Mammary epithelial cell (primary cell): ENCODE measurements at regions of chr6 and their contacts with region 1.

Region 1: DNA sequence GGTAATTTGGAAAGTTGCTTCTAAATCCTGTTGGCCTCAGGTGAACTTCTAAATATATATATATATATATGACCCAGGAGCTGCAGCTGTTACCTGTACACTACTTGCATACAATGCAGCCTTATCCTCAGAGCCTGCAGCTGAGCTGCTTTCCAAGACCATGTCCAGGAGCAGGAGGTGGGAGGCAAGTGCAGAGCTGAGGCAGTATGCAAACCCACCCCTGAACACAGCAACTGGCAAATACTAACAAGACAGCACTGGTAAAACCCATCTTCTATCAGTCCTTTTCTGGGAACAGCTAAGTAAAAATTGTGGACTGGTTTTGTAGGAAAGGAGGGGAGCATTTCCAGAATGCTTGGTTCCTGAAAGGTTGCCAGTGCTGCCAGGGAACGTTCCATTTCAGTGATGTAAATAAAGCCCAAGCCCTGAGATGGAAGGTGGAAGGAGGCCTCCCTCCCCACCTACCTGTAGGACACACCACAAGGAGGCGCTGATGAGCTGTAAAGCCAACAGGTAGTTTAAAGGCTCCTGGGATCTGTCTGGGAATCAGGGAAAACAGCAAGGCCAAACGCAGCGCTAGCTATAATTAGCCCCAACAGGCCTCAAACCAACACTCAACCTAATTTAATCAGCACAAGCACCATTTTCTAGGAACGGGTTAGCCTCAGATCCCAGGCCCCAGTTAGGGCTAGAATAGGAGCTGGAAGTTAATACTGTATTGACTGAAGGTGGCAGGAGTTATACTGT is 93.8 kb upstream of the MAP7 start:
- DNase-seq: peak; percentile 80
- H3K4me3 ChIP-seq: no peak overlapping the region
- H3K27ac ChIP-seq: no peak overlapping the region
- H3K4me1 ChIP-seq: peaks cover 7% of the 10 kb centered on the region
- H3K27me3 ChIP-seq: no peaks in the 10 kb centered on the region
- CTCF ChIP-seq: peak; percentile 96 to 97

Region 2: DNA sequence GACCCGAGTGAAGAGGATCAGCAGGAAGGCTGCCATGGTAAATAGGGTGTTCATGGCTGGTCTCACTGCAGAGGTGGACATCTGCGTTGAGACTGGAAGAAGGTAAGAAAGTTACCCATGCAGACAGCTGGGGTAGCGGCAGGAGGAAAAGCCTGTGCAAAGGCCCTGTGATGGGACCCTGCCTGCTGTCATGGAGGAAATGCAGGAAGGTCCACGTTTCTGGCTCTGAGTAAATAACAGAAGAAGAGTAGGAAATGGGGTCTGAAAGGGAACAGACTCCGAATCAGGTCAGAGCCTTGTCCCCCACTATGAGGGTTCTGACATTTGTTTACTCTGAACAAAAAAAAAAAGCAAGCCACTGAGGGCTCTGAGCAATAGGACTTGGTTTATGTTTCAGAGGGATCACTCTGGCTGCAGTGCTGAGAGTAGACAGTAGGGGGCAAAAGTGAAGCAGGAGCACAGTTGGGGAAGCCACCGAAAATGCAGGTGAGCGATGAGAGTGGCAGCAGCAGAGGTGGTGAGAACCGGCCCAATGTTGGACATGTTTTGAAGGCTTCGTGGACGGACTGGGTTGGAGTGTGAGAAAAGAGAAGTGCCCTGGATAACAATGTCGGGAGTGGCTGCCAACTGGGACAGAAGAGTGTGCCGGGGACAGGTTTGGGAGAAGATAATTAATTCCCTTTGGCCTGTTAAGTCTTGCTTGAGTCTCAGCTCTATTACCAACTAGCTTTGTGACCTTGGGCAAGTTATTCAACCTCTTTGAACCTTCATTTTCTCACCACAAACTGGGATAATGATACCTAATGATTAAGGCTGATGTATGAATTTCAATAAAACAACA is 35.9 kb before region 1 on chr6:
- CTCF ChIA-PET with region 1: interaction called, 13 read pairs
- dilution Hi-C with region 1: no loop called
- in situ Hi-C with region 1: no loop called
- intact Hi-C with region 1: loop called (anchors 1 kb)
- DNase-seq: peak; percentile 76
- H3K4me3 ChIP-seq: no peak overlapping the region
- H3K27ac ChIP-seq: peak overlapping the region; percentile 35
- H3K4me1 ChIP-seq: peaks cover 35% of the 10 kb centered on the region
- H3K27me3 ChIP-seq: no peaks in the 10 kb centered on the region
- CTCF ChIP-seq: peak; percentile 94 to 97

Region 3: DNA sequence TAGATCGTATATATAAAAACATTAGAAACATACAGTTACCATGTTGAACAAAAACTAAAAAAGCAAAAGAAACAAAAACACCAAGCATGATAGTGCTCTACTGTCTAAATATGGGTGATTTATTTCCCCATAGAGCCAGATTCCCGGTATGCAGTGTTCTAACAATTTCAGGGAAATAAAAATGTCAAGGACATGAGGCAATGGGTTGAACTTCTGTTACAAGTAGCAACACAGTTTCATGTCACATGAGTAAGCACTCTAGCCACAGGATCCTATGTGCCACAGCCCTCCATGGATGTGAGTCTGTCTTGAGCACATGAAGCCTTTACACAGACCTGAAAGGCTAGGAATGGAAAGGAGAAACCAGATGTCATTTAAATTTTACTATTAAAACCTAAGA is 52.2 kb after region 1 on chr6:
- CTCF ChIA-PET with region 1: no interaction called
- dilution Hi-C with region 1: no loop called
- in situ Hi-C with region 1: no loop called
- intact Hi-C with region 1: loop called (anchors 2 kb)
- DNase-seq: peak; percentile 61
- H3K4me3 ChIP-seq: no peak overlapping the region
- H3K27ac ChIP-seq: no peak overlapping the region
- H3K4me1 ChIP-seq: peaks cover 27% of the 10 kb centered on the region
- H3K27me3 ChIP-seq: no peaks in the 10 kb centered on the region
- CTCF ChIP-seq: no peak

Region 4: GRCh38 chr6:137013738-137014602 is 369.9 kb after region 1 on chr6:
- CTCF ChIA-PET with region 1: interaction called, 6 read pairs
- dilution Hi-C with region 1: no loop called
- in situ Hi-C with region 1: no loop called
- intact Hi-C with region 1: loop called (anchors 1 kb)
- DNase-seq: peak; percentile 71
- H3K4me3 ChIP-seq: no peak overlapping the region
- H3K27ac ChIP-seq: no peak overlapping the region
- H3K4me1 ChIP-seq: peaks cover 13% of the 10 kb centered on the region
- H3K27me3 ChIP-seq: peaks cover 4% of the 10 kb centered on the region
- CTCF ChIP-seq: peak; percentile 66 to 85